ENCODE measurements at regions of chr2 and their contacts with region 1.

Region 1: GRCh38 chr2:201231781-201232466 is 28.4 kb upstream of the CASP8 start:
- DNase-seq: peak; percentile 88
- H3K4me3 Mint-ChIP-seq: peak overlapping the region; percentile 93
- H3K27ac Mint-ChIP-seq: peak overlapping the region; percentile 87
- H3K4me1 Mint-ChIP-seq: peaks cover 57% of the 10 kb centered on the region
- H3K27me3 Mint-ChIP-seq: no peaks in the 10 kb centered on the region

Region 2: GRCh38 chr2:200888704-200889625 is 343.0 kb before region 1 on chr2 and contains the starts of genes NIF3L1 and PPIL3:
- intact Hi-C with region 1: loop called (anchors 1 kb)
- DNase-seq: peak; percentile 96
- H3K4me3 Mint-ChIP-seq: peak within 1 kb of the TSS; percentile 97
- H3K27ac Mint-ChIP-seq: peak within 1 kb of the TSS; percentile 99
- H3K4me1 Mint-ChIP-seq: peaks cover 54% of the 10 kb centered on the region
- H3K27me3 Mint-ChIP-seq: no peaks in the 10 kb centered on the region
- total RNA-seq, gene NIF3L1: 26.6 and 27.3 TPM in 2 replicates
- total RNA-seq, gene PPIL3: 44.2 TPM in 2 replicates

Region 3: DNA sequence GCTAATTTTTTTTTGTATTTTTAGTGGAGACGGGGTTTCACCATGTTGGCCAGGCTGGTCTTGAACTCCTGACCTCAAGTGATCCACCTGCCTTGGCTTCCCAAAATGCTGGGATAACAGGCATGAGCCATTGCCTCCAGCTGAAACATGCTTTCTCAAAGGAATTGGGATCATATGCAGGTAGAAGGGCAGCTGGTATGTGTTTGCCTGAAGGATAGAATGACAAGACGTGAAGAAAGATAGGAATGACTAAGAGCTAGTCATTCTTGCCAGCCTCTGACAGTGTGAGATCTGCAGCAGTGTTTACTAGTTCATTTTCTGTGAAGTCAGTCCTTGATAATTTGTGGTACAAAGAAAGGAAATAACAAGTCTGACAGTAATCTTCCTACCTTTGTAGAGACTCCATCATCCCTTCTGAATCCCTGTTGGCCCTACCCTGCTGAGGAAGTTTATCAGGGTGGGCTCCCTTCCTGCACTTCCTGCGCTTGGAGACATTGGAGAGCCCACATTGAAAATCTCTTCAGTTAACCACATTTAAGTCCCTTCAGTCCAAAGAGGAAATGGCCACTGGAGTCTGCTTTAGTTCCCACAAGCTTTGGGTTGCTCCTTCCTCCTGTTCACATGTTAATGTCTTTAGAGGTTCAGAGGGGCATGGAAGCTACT is 101.3 kb before region 1 on chr2:
- intact Hi-C with region 1: loop called (anchors 1 kb)
- DNase-seq: peak; percentile 45
- H3K4me3 Mint-ChIP-seq: peak overlapping the region; percentile 90
- H3K27ac Mint-ChIP-seq: peak overlapping the region; percentile 99
- H3K4me1 Mint-ChIP-seq: peaks cover 56% of the 10 kb centered on the region
- H3K27me3 Mint-ChIP-seq: no peaks in the 10 kb centered on the region

Region 4: GRCh38 chr2:201257956-201258665 is 26.2 kb after region 1 on chr2:
- intact Hi-C with region 1: loop called (anchors 1 kb)
- DNase-seq: peak; percentile 93
- H3K4me3 Mint-ChIP-seq: peak overlapping the region; percentile 91
- H3K27ac Mint-ChIP-seq: peak overlapping the region; percentile 100
- H3K4me1 Mint-ChIP-seq: peaks cover 84% of the 10 kb centered on the region
- H3K27me3 Mint-ChIP-seq: no peaks in the 10 kb centered on the region

Region 5: DNA sequence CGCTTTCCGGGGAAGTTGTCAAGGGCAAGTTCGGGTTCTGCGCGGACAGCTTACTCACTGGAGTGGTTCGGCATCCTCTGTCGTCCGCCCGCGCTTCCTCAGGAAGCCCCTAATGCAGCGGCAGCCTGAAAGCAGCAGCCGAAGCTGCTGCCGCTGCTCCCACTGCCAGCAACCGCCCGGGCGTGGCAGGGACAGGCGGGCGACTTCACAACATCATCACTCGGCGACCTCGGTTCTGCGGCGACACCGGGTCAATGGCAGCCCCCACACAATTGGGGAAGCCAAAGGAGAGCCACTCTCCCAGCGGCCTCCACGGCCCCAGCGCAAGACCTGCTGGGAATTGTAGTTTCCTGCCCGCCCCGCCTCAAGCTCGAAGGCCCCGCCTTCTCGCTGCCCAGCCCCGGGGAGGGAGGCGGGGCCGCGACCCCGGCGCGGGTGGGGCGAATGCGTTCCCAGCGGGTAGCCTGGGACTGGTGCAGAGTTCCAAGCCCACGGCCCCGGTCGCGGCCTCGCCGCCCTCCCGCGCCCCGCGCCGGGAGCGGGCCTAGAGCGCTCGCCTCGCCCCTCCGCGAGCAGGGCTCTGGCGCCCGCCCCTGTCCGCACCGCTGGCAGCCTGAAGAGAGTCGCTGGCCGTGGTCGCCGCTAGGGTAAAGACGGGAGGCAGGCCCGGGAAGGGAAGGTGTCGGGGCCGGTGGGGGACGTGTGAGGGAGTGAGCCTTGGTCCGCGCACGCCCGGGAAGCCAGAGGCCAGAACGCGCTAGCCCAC is 219.6 kb after region 1 on chr2 and contains the starts of genes STRADB and TRAK2:
- intact Hi-C with region 1: loop called (anchors 1 kb)
- DNase-seq: peak; percentile 94
- H3K4me3 Mint-ChIP-seq: peak within 1 kb of the TSS; percentile 94
- H3K27ac Mint-ChIP-seq: peak within 1 kb of the TSS; percentile 93
- H3K4me1 Mint-ChIP-seq: peaks cover 43% of the 10 kb centered on the region
- H3K27me3 Mint-ChIP-seq: peaks cover 12% of the 10 kb centered on the region
- total RNA-seq, gene STRADB: 14.6 and 18.1 TPM in 2 replicates
- total RNA-seq, gene TRAK2: 24.7 and 28.9 TPM in 2 replicates

Region 6: DNA sequence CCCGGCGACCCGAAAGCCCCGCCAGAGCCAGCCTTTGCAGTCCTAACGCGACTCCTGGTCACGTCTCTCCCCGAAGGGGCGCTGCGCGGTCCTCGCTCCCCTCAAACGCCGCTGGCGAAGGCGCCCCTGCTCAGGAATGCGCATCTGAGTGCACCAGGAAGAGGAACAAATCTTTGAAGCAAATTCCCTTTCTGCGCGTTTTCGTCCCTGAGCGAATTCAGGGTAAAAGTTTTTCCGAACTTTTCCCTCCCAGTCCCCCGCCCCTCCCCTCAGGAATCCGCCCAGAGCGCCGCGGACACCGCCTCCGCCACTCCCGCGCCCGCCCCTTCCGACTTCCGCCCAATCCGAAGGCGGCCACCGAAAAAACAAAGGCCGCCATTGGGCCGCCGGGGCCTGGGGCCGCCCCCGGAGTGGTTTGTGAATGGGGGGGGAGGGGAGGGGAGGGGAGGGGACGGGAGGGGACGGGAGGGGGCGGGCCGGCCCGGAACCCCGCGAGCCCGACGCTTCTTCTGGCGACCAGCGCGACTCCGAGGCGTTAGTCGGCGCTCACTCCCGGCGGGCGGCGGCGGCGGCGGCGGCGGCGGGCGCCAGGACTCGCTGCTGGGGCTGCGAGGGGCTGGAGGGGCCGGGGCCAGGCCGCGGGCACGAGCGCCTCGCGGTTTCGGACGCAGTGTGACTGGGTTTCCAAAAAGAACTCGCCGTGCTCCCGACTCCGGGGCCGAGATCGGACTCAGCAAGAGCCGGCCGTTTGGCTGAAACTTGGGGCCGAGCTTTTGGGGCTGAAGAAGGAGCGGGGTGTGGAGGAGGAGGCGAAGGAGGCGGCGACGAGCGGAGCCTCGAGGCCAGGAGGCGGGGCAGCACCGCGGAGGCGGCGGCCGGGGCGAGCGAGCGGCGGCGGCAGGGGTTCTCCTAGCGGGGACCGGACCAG is 801.7 kb after region 1 on chr2 and contains the start of gene FZD7:
- intact Hi-C with region 1: loop called (anchors 10 kb)
- DNase-seq: peak; percentile 83
- H3K4me3 Mint-ChIP-seq: peak within 1 kb of the TSS; percentile 89
- H3K27ac Mint-ChIP-seq: peak within 1 kb of the TSS; percentile 63
- H3K4me1 Mint-ChIP-seq: peaks cover 12% of the 10 kb centered on the region
- H3K27me3 Mint-ChIP-seq: peaks cover 44% of the 10 kb centered on the region
- total RNA-seq, gene FZD7: 1.2 and 1.5 TPM in 2 replicates

Measured in activated T-helper 1 cell treated with anti-CD3 and anti-CD28 coated beads, Interleukin-12 subunit alpha, Interleukin-12 subunit beta, Interleukin-2, Interleukin-4 antibody, amounts not matched to agents 30 ng/mL and 10 ng/mL and 1 ng/mL, durations not matched to agents 14 hours and 24 hours and 36 hours (primary cell).